Caco-2 (cell line): ENCODE measurements at regions of chr10 and their contacts with region 1.

Region 1: DNA sequence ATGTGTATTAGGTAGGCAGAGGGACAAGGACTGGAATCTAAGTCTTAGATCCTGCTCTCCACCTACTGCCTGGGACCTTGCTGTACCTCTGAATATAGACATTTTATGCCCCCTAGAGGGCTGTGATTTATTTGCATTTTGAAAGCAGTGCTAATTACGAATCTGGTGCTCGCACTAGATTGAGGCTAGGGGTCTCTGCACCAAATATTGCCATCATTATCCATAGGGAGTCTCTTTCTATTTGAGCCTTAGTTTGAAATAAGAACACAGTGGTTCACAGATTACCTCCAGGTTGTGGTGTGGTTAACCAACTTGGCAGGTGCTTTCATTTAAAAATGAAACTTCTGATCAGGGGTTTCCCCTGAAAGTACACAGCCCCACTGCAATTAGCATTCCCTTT is 41.8 kb downstream of the CNNM1 start:
- DNase-seq: peak in 1 of 2 experiments; percentile 61
- H3K4me3 ChIP-seq: no peak overlapping the region
- H3K4me3 Mint-ChIP-seq: no peak overlapping the region
- H3K27ac Mint-ChIP-seq: no peak overlapping the region
- H3K4me1 ChIP-seq: no peaks in the 10 kb centered on the region
- H3K4me1 Mint-ChIP-seq: no peaks in the 10 kb centered on the region
- H3K27me3 ChIP-seq: no peaks in the 10 kb centered on the region
- H3K27me3 Mint-ChIP-seq: peaks cover 14% of the 10 kb centered on the region
- CTCF ChIP-seq: peak; percentile 60 to 68

Region 2: GRCh38 chr10:98790802-98791201 is 580.2 kb before region 1 on chr10:
- CTCF ChIA-PET with region 1: no interaction called
- POLR2A ChIA-PET with region 1: no interaction called
- intact Hi-C with region 1: loop called (anchors 5 kb)
- DNase-seq: no peak
- H3K4me3 ChIP-seq: no peak overlapping the region
- H3K4me3 Mint-ChIP-seq: no peak overlapping the region
- H3K27ac Mint-ChIP-seq: no peak overlapping the region
- H3K4me1 ChIP-seq: no peaks in the 10 kb centered on the region
- H3K4me1 Mint-ChIP-seq: no peaks in the 10 kb centered on the region
- H3K27me3 ChIP-seq: no peaks in the 10 kb centered on the region
- H3K27me3 Mint-ChIP-seq: no peaks in the 10 kb centered on the region
- CTCF ChIP-seq: peak; percentile 26 to 31

Region 3: DNA sequence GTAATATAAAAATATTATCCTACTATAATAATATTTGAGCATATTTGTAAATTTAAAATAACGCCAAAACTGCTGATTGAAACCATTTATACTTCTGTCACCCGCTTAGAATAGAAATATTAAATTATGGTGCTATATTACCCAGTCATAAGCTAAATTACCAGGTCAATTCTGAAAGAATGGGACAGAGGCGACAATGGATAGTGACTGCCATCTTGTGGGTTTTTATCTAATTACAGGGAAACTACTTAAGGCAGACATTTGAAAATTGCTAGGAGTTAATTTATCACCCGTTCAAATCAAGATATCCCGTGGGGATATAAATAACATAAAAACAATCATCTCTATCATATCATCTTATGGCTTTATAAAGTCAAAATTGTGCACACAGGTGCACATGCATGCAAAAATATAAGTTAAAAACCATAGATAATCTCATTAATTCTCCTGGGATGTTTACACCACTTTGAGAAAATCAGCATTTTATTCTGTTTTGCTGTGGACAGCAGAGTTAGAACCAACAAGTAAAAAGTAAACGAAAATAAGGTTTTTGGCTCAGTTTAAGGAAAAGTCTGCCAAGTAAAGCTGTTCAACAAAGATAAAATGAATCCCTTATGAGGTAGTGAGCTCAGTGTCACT is 94.0 kb before region 1 on chr10:
- CTCF ChIA-PET with region 1: no interaction called
- POLR2A ChIA-PET with region 1: no interaction called
- intact Hi-C with region 1: loop called (anchors 2 kb)
- DNase-seq: peak in 1 of 2 experiments; percentile 13
- H3K4me3 ChIP-seq: no peak overlapping the region
- H3K4me3 Mint-ChIP-seq: no peak overlapping the region
- H3K27ac Mint-ChIP-seq: no peak overlapping the region
- H3K4me1 ChIP-seq: no peaks in the 10 kb centered on the region
- H3K4me1 Mint-ChIP-seq: no peaks in the 10 kb centered on the region
- H3K27me3 ChIP-seq: no peaks in the 10 kb centered on the region
- H3K27me3 Mint-ChIP-seq: peaks cover 6% of the 10 kb centered on the region
- CTCF ChIP-seq: peak; percentile 37 to 65

Region 4: DNA sequence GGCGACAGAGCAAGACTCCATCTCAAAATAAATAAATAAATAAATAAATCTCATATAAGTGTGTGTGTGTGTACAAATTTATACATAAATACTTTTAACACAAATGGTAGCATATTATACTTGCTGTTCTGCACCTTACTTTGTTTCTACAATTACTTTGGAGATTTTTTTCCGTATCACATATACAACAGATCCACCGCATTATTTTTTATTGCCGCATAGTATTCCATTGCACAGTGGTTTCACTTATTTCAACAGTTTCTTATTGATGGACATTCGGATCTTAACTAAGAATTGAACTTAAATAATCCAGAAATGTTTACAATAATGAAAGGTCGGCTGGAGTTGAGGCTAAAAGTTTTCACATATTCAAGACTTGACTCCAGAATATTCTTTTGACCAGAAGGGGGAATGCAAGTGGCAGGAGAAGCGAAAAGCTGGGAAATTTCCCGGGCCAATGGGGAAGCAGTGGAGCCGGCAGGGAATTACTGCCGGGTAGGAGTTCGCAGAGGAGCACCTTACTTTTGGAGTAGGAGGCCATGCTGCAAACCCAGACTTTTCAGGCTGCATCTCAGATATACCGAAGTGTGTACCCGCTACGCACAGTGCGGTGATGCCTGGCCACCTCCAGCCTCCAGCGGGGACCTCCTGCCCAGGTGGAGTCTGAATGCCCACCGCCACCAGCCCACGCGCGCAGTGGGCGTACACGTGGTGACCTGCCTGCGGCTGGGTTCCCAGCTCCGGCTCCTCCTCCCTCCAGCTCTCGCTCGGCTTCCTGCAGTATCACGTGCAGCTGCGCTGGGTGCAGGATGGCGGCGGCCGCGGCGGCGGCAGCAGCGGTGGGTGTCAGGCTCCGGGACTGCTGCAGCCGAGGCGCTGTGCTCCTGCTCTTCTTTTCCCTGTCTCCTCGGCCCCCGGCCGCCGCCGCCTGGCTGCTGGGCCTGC is 42.1 kb before region 1 on chr10 and contains the start of gene CNNM1:
- CTCF ChIA-PET with region 1: no interaction called
- POLR2A ChIA-PET with region 1: no interaction called
- intact Hi-C with region 1: no loop called
- DNase-seq: no peak
- H3K4me3 ChIP-seq: no peak within 1 kb of the TSS
- H3K4me3 Mint-ChIP-seq: no peak within 1 kb of the TSS
- H3K27ac Mint-ChIP-seq: no peak within 1 kb of the TSS
- H3K4me1 ChIP-seq: peaks cover 4% of the 10 kb centered on the region; the same call in 1 of the 2 replicates
- H3K4me1 Mint-ChIP-seq: no peaks in the 10 kb centered on the region
- H3K27me3 ChIP-seq: no peaks in the 10 kb centered on the region
- H3K27me3 Mint-ChIP-seq: no peaks in the 10 kb centered on the region
- CTCF ChIP-seq: no peak
- total RNA-seq, gene CNNM1: not detected in 2 replicates